Cardiac septum (tissue), 1 donor: ENCODE measurements at regions of chr10 and their contacts with region 1.

Region 1: DNA sequence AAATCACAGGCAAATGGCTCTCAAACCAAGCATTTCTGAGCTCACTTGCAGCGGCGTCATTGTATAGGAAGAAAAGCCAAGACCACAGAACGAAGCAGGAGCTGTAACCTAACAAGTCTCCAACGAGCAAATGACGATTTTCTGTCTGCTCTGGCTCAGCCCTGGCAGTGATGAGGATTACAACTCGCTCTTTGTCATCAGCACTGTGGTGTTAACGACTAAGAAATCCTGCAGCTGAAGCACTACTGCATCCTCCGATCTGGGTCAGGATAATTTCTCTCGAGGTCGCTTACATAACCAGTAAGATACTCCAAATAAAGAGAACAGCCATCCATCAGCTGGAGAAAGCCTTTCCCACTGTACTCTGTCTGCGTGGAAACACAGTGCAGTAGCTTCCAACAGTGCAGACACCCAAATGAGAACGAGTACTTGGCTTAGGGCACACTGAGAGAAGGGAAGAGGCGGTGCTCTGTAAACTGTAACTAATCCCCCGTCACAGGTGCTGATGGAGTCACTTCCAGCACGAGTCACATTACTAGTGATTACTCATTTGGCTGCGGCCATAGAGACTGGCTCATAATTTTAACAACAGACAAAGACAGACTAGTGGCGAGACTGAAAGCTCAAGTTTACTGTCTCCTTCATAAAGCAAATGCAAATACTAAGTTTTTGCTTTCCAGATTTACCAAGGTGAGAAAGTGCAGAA is 135.8 kb downstream of the NRBF2 start:
- DNase-seq: peak; percentile 91

Region 2: GRCh38 chr10:63133056-63133820 is 135.7 kb before region 1 on chr10 and contains the start of gene NRBF2:
- intact Hi-C with region 1: no loop called
- DNase-seq: peak; percentile 98
- total RNA-seq, gene NRBF2: 12.0 TPM

Region 3: GRCh38 chr10:63217120-63217605 is 51.8 kb before region 1 on chr10:
- intact Hi-C with region 1: loop called (anchors 2 kb)
- DNase-seq: no peak

Region 4: GRCh38 chr10:63521416-63522276 is 252.7 kb after region 1 on chr10:
- intact Hi-C with region 1: loop called (anchors 5 kb)
- DNase-seq: peak; percentile 90